ENCODE measurements at regions of chr3 and their contacts with region 1.

Region 1: GRCh38 chr3:26687466-26687865 is 64.9 kb downstream of the LRRC3B start:
- DNase-seq: no peak
- H3K4me3 ChIP-seq: no peak overlapping the region
- H3K27ac ChIP-seq: no peak overlapping the region
- H3K4me1 ChIP-seq: peaks cover 0 to 1% (median 0%) of the 10 kb centered on the region in 4 experiments; a peak in 1 of 7 replicates
- H3K27me3 ChIP-seq: no peaks in the 10 kb centered on the region
- CTCF ChIP-seq: no peak
- EP300 ChIP-seq: no peak
- POLR2A ChIP-seq: no peak
- RAD21 ChIP-seq: no peak

Region 2: GRCh38 chr3:26639339-26639738 is 48.1 kb before region 1 on chr3:
- CTCF ChIA-PET with region 1: no interaction called
- POLR2A ChIA-PET with region 1: no interaction called
- DNase-seq: no peak
- H3K4me3 ChIP-seq: no peak overlapping the region
- H3K27ac ChIP-seq: no peak overlapping the region
- H3K4me1 ChIP-seq: no peaks in the 10 kb centered on the region
- H3K27me3 ChIP-seq: peaks cover 0 to 2% (median 0%) of the 10 kb centered on the region in 4 experiments; a peak in 4 of 7 replicates
- CTCF ChIP-seq: no peak
- EP300 ChIP-seq: no peak
- POLR2A ChIP-seq: no peak
- RAD21 ChIP-seq: no peak

Region 3: DNA sequence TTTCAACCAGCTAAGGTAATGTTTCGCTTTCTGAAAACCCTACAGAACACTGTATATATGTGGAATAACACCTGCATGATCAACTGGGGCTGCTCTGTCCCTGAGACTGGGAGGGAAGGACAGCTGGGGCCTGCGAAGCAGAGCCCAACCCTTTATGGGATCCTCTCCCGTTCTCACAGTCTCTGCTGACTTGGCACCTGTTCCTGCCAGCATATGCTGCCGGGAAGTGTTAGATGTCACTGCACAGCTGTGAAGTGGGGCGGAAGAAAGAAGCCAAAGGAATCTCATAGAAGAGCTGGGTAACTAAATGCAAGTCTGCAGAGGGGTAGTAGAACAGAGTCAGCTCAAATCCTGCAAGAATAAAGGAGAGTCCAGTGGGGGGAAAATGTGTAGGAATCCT is 35.3 kb before region 1 on chr3:
- CTCF ChIA-PET with region 1: no interaction called
- POLR2A ChIA-PET with region 1: no interaction called
- DNase-seq: no peak
- H3K4me3 ChIP-seq: no peak overlapping the region
- H3K27ac ChIP-seq: no peak overlapping the region
- H3K4me1 ChIP-seq: no peaks in the 10 kb centered on the region
- H3K27me3 ChIP-seq: no peaks in the 10 kb centered on the region
- CTCF ChIP-seq: no peak
- EP300 ChIP-seq: no peak
- POLR2A ChIP-seq: no peak
- RAD21 ChIP-seq: no peak

Region 4: DNA sequence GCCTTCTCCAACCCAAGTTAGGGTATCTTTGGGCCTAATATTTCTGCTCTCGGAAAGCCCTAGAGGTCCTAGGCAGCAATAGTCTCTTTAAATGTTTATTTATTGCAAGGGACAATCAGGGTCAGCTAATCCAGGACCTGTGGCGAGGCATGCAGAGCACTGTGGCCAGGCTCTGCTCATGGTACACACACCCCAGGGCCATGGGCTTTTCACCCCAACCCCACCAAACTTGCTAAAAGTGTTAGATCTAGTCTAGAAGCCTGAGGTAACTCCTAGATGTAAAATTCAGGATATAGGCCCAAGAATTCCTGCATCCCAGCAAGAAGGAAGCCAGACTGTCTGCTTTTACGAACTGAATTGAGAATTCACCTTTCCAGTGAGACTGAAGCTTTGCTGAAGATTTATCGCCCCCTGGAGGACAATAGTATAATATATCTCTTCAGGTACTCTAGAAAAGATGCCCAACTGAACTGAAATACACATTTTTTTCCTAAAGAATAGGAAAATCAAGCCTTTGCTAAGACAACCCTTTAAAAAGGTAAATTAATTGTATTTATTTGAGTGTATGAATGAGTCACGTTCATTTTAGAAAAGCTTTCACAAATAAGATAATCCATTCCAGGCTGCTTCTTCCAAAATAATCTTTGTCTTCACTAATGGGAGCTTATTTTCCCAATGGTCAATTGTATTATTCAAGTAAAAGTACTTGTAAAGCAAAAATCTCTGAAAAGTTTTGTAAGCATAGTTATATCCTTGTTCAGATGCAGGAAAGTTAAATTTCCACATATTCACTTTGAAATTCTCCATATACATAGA is 25.0 kb after region 1 on chr3:
- CTCF ChIA-PET with region 1: interaction called, 12 read pairs
- POLR2A ChIA-PET with region 1: no interaction called
- DNase-seq: peak in 1 of 2 experiments; percentile 45
- H3K4me3 ChIP-seq: no peak overlapping the region
- H3K27ac ChIP-seq: no peak overlapping the region
- H3K4me1 ChIP-seq: peaks cover 0 to 4% (median 0%) of the 10 kb centered on the region in 4 experiments; a peak in 1 of 7 replicates
- H3K27me3 ChIP-seq: no peaks in the 10 kb centered on the region
- CTCF ChIP-seq: peak in 2 of 3 experiments; percentile 58 to 66; a peak in 3 of 4 replicates
- EP300 ChIP-seq: no peak
- POLR2A ChIP-seq: no peak
- RAD21 ChIP-seq: peak; percentile 84 to 85